Head of caudate nucleus (tissue), 42 donors: ENCODE measurements at regions of chr1 and their contacts with region 1.

Region 1: GRCh38 chr1:113978863-113979702 is at the start of gene OLFML3:
- DNase-seq: peak; percentile 56 to 92 (median 82)

Region 2: DNA sequence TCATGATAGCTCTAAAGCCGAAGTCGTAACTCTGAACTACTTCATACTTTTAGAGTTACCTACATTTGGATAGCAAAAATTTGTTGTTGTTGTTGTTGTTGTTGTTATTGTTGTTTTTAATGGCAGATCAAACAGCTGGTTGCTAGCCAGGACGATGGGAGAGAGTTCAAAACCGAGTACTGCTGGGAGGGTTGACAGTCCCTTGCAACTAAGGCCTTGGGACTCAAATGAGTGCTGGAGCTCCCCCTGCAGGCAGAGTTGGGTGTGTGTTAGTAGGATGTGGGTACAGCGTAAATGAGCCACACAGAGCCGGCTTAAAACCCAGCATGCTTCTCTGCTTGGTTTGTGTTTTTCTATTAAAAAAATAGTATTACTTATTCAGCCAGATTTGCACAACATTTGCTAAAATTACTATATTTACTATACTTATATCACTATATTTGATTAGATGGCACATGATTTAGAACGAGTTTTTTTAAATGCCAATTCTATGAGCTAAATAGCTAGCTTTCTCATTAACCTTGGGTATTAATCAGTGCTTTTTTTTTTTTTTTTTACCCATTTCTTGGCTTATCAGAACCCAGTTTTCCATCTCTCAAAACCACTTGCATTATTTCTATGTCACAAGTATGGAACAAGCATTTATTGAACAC is 303.8 kb after region 1 on chr1:
- intact Hi-C with region 1: loop called (anchors 2 kb)
- DNase-seq: peak; percentile 72 to 95 (median 90)